MCF 10A (cell line): ENCODE measurements at regions of chr5 and their contacts with region 1.

Region 1: DNA sequence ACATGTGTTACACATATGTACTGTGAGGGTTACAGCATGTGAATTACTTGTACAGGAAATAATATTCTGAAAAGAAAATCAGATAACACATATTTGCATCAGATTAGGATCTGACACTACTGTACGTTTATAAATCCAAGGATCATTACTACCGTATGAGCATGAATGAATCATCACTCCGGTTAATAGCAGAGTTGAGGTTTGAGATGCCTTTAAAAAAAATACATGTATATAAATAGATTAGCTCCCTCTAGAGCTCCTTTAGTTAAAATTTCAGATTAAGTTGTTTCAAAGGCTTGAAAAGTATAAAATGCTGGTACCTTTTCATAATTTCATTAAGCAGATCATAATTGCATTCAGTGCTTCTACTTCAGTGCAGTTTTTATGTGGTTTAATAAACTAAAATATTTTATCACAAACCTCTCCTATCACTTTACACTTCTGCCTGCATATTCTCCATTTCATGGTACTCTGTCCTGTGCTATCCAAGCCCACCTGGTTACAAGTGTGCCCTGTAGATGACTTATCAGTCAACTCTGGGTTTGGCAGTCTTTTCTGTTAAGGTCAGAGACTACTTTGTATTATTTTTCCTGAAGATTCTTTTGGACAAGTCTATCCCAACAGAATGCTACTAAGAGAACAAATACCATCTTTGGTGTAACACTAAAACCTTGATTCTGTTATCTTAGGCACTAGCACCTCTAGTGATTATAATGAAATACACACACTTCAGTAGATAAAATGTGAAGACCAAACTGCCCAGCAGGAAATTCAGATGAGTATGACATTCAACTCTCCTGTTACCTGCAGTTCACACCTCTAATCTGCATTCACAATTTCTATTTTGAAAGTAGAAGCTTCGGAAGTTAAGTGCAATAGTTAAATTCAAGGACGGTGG is 48.0 kb upstream of the POU5F2 start:
- DNase-seq: peak; percentile 43
- H3K4me3 Mint-ChIP-seq: no peak overlapping the region
- H3K27ac Mint-ChIP-seq: no peak overlapping the region
- H3K4me1 Mint-ChIP-seq: peaks cover 5% of the 10 kb centered on the region
- H3K27me3 Mint-ChIP-seq: no peaks in the 10 kb centered on the region
- CTCF ChIP-seq: no peak

Region 2: GRCh38 chr5:92916036-92916435 is 873.4 kb before region 1 on chr5:
- CTCF ChIA-PET with region 1: interaction called, 3 read pairs
- POLR2A ChIA-PET with region 1: no interaction called
- intact Hi-C with region 1: loop called (anchors 10 kb)
- DNase-seq: peak; percentile 36
- H3K4me3 Mint-ChIP-seq: no peak overlapping the region
- H3K27ac Mint-ChIP-seq: no peak overlapping the region
- H3K4me1 Mint-ChIP-seq: no peaks in the 10 kb centered on the region
- H3K27me3 Mint-ChIP-seq: no peaks in the 10 kb centered on the region
- CTCF ChIP-seq: no peak

Region 3: GRCh38 chr5:93868851-93869250 is 79.4 kb after region 1 on chr5:
- CTCF ChIA-PET with region 1: no interaction called
- POLR2A ChIA-PET with region 1: no interaction called
- intact Hi-C with region 1: no loop called
- DNase-seq: no peak
- H3K4me3 Mint-ChIP-seq: no peak overlapping the region
- H3K27ac Mint-ChIP-seq: no peak overlapping the region
- H3K4me1 Mint-ChIP-seq: no peaks in the 10 kb centered on the region
- H3K27me3 Mint-ChIP-seq: no peaks in the 10 kb centered on the region
- CTCF ChIP-seq: no peak